Ascending aorta (tissue), 2 donors: ENCODE measurements at regions of chr4 and their contacts with region 1.

Region 1: DNA sequence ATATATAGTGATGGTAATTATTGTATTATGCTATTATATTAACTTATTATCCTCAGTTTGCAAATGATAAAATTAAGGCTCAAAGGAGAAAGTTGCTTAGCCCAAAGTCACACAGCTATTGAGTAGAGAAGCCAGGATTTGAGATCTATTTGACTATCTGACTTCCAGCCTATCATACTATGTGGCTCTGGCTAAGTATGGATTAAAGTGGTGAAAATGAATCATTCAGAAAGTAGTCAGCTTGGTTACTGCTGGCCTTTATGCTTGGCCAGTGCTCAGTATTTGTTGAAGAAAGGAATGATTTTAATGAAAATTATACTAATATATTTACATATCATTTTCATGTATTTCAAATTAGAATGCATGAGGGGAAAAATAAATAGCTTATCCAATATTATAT is 219.8 kb downstream of the SHROOM3 start:
- DNase-seq: no peak
- H3K4me3 ChIP-seq: no peak overlapping the region
- H3K27ac ChIP-seq: peak overlapping the region; percentile 76 to 80
- H3K4me1 ChIP-seq: peaks cover 10 to 40% of the 10 kb centered on the region in 2 donors
- H3K27me3 ChIP-seq: no peaks in the 10 kb centered on the region
- CTCF ChIP-seq: no peak

Region 2: GRCh38 chr4:76639292-76639691 is 15.5 kb before region 1 on chr4:
- intact Hi-C with region 1: loop called (anchors 2 kb)
- DNase-seq: peak in 1 of 2 donors; percentile 75
- H3K4me3 ChIP-seq: peak overlapping the region in 1 of 2 donors; percentile 10
- H3K27ac ChIP-seq: peak overlapping the region; percentile 52 to 65
- H3K4me1 ChIP-seq: peaks cover 8 to 44% of the 10 kb centered on the region in 2 donors
- H3K27me3 ChIP-seq: no peaks in the 10 kb centered on the region
- CTCF ChIP-seq: no peak

Region 3: GRCh38 chr4:76709772-76710090 is 54.9 kb after region 1 on chr4:
- intact Hi-C with region 1: loop called (anchors 2 kb)
- DNase-seq: no peak
- H3K4me3 ChIP-seq: no peak overlapping the region
- H3K27ac ChIP-seq: peak overlapping the region; percentile 69 to 73
- H3K4me1 ChIP-seq: peaks cover 9 to 49% of the 10 kb centered on the region in 2 donors
- H3K27me3 ChIP-seq: no peaks in the 10 kb centered on the region
- CTCF ChIP-seq: no peak

Region 4: DNA sequence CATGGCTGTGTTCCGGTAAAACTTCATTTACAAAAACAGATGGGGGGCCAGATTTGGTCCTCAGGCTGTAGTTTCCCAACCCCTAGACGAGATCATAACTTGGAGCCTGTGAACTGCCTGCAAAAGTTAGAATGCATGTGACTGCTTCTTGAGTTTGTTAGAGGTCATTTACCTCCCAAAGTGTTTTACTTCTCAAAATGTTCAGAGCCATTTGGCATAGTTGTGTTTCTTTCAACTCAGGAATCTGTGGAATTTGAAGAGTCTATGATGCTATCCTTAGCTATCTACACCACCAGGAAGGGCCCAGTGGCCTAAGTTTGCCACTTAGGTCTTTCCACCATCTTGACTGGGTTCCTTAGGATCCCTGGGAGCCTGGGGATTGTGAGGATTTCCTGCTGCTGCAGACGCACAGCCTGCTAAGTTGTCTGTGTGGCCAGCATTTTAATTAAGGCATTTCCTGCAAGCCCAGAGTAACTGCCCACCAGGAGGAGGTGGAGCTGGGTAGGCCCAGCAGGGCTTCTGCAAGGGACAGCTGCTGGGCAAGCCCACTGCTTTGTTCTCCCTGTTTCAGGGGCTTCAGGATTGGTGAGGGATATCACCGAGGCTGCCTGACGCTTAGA is 367.9 kb after region 1 on chr4:
- intact Hi-C with region 1: no loop called
- DNase-seq: no peak
- H3K4me3 ChIP-seq: no peak overlapping the region
- H3K27ac ChIP-seq: peak overlapping the region in 1 of 2 donors; percentile 55
- H3K4me1 ChIP-seq: peaks cover 6 to 14% of the 10 kb centered on the region in 2 donors
- H3K27me3 ChIP-seq: no peaks in the 10 kb centered on the region
- CTCF ChIP-seq: no peak